HCT116 (cell line): ENCODE measurements at regions of chr18 and their contacts with region 1.

Region 1: GRCh38 chr18:830315-830901 is 18.4 kb upstream of the YES1 start:
- DNase-seq: no peak
- ATAC-seq: no peak
- H3K4me3 ChIP-seq: no peak overlapping the region
- H3K27ac ChIP-seq: no peak overlapping the region
- H3K4me1 ChIP-seq: peaks cover 17 to 18% of the 10 kb centered on the region in 2 experiments; a peak in 3 of 4 replicates
- H3K27me3 ChIP-seq: no peaks in the 10 kb centered on the region
- CTCF ChIP-seq: no peak
- POLR2A ChIP-seq: no peak
- RAD21 ChIP-seq: no peak

Region 2: DNA sequence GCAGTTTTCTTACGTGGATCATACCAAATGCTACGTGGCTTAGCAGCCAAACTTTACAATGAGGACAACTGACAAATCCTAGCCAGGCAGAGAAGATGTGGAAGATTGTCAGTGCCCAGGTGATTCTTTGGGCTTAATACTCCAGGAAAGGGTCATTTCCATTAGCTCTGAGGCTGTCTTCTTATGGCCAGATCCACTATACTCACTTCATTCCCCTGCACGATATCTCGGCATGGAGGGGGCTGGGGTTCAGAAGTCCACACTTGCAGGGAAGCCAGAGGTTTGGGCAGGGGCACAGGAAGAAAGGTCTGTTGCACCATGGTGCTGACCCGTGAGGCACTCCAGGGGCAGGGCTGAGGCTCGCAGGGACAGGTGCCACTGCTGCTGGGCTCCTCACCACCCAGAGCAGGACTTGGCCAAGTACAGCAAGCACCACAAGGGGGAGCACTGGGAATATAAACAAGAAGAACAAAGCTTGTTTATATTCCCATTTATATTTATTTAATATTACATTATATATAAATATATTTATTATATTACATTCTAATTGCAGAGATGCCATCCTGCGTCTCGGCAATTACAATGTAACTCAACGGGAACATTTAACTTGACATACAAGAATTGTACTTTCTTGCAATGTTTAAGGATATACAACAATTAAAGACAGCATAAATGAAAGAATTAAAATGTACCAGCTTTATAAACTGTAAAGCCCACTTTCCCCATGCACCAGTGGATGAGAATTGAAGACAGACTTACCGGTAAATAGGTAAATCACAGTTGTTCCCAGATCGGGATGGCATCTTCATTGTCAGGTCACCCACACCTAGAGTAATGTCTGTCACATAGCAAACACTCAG is 206.4 kb before region 1 on chr18:
- CTCF ChIA-PET with region 1: interaction called, 112 read pairs
- POLR2A ChIA-PET with region 1: interaction called, 5 read pairs
- RAD21 ChIA-PET with region 1: interaction called, 9 to 15 read pairs
- intact Hi-C with region 1: loop called (anchors 1 kb)
- DNase-seq: peak; percentile 69
- ATAC-seq: peak; percentile 100
- H3K4me3 ChIP-seq: no peak overlapping the region
- H3K27ac ChIP-seq: no peak overlapping the region
- H3K4me1 ChIP-seq: peaks cover 0 to 7% of the 10 kb centered on the region in 2 experiments; a peak in 1 of 4 replicates
- H3K27me3 ChIP-seq: no peaks in the 10 kb centered on the region
- CTCF ChIP-seq: peak; percentile 55 to 81 (median 70)
- POLR2A ChIP-seq: no peak
- RAD21 ChIP-seq: peak; percentile 74

Region 3: DNA sequence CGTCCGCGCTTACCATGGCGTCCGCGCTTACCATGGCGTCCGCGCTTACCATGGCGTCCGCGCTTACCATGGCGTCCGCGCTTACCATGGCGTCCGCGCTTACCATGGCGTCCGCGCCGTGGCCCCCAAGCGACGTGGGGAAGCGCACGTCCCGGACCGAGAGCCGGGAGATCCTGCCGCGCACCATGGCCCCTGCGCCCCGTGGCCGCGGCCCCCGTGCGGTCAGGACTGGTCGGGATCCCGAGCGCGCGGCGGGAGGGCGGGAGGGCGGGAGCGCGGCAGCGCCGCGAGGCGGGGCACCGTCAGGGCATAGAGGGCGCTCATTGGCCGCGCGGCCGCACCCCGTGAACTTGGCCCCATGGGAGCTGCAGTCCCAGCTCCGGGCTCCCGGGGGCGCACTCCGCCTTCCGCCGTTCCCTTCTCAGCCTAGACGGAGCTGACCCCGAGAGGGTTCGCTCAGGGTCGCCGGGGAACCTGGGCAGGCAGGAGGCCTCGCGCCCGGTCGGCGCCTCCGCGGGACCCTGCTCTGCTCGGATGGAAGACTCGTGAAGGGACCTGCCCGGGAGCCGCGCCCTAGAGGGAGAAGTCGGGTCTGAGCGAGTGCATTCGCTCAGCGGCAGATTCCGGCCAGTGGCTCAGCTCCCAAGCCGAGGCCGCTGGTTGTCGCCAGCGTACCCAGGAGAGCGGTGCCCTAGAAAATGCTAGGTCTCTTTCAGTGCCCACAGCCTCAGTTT is 117.8 kb before region 1 on chr18 and contains the start of gene ENOSF1:
- CTCF ChIA-PET with region 1: interaction called, 19 read pairs
- POLR2A ChIA-PET with region 1: no interaction called
- RAD21 ChIA-PET with region 1: no interaction called
- intact Hi-C with region 1: no loop called
- DNase-seq: peak; percentile 54
- ATAC-seq: peak; percentile 98
- H3K4me3 ChIP-seq: peak within 1 kb of the TSS; percentile 65 to 82
- H3K27ac ChIP-seq: peak within 1 kb of the TSS; percentile 70
- H3K4me1 ChIP-seq: peaks cover 2 to 12% of the 10 kb centered on the region in 2 experiments; a peak in 3 of 4 replicates
- H3K27me3 ChIP-seq: no peaks in the 10 kb centered on the region
- CTCF ChIP-seq: peak; percentile 60 to 79 (median 63); a peak in 5 of 6 replicates
- POLR2A ChIP-seq: peak; percentile 58
- RAD21 ChIP-seq: peak; percentile 49; the same call in 1 of the 2 replicates
- total RNA-seq, gene ENOSF1: 90.0 TPM

Region 4: DNA sequence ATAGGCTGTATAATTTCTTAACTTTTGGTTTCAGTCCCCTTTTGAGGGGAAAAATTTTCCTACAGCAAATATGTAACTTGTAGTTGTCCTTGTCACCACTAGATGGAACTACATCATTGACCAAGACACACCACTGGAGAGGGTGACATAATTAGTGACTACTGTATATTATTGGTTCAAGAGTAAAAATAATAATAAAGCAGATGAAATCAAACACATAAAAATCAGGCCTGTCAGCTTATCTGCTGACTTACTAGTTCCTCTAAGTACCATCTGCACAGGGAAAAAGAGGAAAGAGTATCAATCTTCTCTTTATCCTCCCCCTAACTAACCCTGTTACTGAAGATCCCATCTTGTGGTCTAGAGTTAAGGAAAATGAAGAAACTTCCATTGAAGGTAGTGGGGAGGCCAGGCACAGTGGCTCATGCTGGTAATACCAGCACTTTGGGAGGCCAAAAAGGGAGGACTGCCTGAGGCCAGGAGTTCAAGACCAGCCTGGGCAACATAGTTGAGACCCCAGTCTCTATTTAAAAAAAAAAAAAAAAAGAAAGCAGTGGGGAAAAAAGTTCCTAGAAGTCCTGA is 88.4 kb before region 1 on chr18:
- CTCF ChIA-PET with region 1: interaction called, 48 read pairs
- POLR2A ChIA-PET with region 1: no interaction called
- RAD21 ChIA-PET with region 1: interaction called in 1 of 2 experiments, 4 read pairs
- intact Hi-C with region 1: loop called (anchors 1 kb)
- DNase-seq: peak; percentile 34
- ATAC-seq: peak; percentile 85
- H3K4me3 ChIP-seq: no peak overlapping the region
- H3K27ac ChIP-seq: no peak overlapping the region
- H3K4me1 ChIP-seq: no peaks in the 10 kb centered on the region
- H3K27me3 ChIP-seq: no peaks in the 10 kb centered on the region
- CTCF ChIP-seq: peak; percentile 58 to 80 (median 76); a peak in 5 of 6 replicates
- POLR2A ChIP-seq: no peak
- RAD21 ChIP-seq: peak; percentile 82

Region 5: DNA sequence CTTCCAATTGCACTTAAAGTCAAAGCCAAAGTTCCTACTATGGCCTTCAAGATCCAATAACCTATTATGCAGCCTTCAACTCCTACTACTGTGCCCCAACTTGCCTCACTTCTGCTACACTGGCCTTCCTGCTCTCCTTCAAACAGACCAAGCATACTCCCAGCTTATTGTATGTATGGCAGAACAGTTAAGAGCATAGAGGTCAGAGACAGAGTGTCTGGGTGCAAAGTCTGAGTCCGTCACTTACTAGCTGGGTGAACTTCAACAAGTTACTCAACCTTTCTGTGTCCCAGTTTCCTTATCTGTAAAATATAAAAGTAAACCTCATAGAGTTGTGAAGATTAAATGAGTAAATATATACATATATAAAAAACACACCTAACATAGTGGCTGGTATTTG is 55.6 kb before region 1 on chr18:
- CTCF ChIA-PET with region 1: no interaction called
- POLR2A ChIA-PET with region 1: no interaction called
- RAD21 ChIA-PET with region 1: no interaction called
- intact Hi-C with region 1: no loop called
- DNase-seq: no peak
- ATAC-seq: no peak
- H3K4me3 ChIP-seq: no peak overlapping the region
- H3K27ac ChIP-seq: no peak overlapping the region
- H3K4me1 ChIP-seq: peaks cover 0 to 3% of the 10 kb centered on the region in 2 experiments; a peak in 1 of 4 replicates
- H3K27me3 ChIP-seq: no peaks in the 10 kb centered on the region
- CTCF ChIP-seq: no peak
- POLR2A ChIP-seq: no peak
- RAD21 ChIP-seq: no peak